GM12878 (cell line): ENCODE measurements at regions of chr16 and their contacts with region 1.

Region 1: GRCh38 chr16:14310519-14310991 is 239.4 kb downstream of the MRTFB start:
- DNase-seq: peak; percentile 86
- ATAC-seq: peak; percentile 76
- H3K4me3 ChIP-seq: peak overlapping the region; percentile 91; the same call in 1 of the 2 replicates
- H3K27ac ChIP-seq: peak overlapping the region; percentile 92
- H3K4me1 ChIP-seq: peaks cover 54% of the 10 kb centered on the region
- H3K27me3 ChIP-seq: no peaks in the 10 kb centered on the region
- CTCF ChIP-seq: peak; percentile 35 to 60 (median 43); a peak in 5 of 6 replicates
- EP300 ChIP-seq: peak; percentile 82 to 97
- POLR2A ChIP-seq: 0 out of 2 replicates have a peak, but pooled peaks have one; percentile 27
- RAD21 ChIP-seq: peak; percentile 13; the same call in 1 of the 2 replicates

Region 2: GRCh38 chr16:13742928-13743327 is 567.6 kb before region 1 on chr16:
- CTCF ChIA-PET with region 1: no interaction called
- POLR2A ChIA-PET with region 1: no interaction called
- RAD21 ChIA-PET with region 1: no interaction called
- SMC1A ChIA-PET with region 1: no interaction called
- in situ Hi-C with region 1: no loop called
- intact Hi-C with region 1: no loop called
- DNase-seq: no peak
- ATAC-seq: no peak
- H3K4me3 ChIP-seq: no peak overlapping the region
- H3K27ac ChIP-seq: no peak overlapping the region
- H3K4me1 ChIP-seq: no peaks in the 10 kb centered on the region
- H3K27me3 ChIP-seq: no peaks in the 10 kb centered on the region
- CTCF ChIP-seq: no peak
- EP300 ChIP-seq: no peak
- POLR2A ChIP-seq: no peak
- RAD21 ChIP-seq: no peak

Region 3: GRCh38 chr16:13945744-13946505 is 364.6 kb before region 1 on chr16:
- CTCF ChIA-PET with region 1: no interaction called
- POLR2A ChIA-PET with region 1: no interaction called
- RAD21 ChIA-PET with region 1: no interaction called
- SMC1A ChIA-PET with region 1: no interaction called
- in situ Hi-C with region 1: no loop called
- intact Hi-C with region 1: no loop called
- DNase-seq: no peak
- ATAC-seq: no peak
- H3K4me3 ChIP-seq: no peak overlapping the region
- H3K27ac ChIP-seq: no peak overlapping the region
- H3K4me1 ChIP-seq: no peaks in the 10 kb centered on the region
- H3K27me3 ChIP-seq: no peaks in the 10 kb centered on the region
- CTCF ChIP-seq: no peak
- EP300 ChIP-seq: no peak
- POLR2A ChIP-seq: no peak
- RAD21 ChIP-seq: no peak

Region 4: DNA sequence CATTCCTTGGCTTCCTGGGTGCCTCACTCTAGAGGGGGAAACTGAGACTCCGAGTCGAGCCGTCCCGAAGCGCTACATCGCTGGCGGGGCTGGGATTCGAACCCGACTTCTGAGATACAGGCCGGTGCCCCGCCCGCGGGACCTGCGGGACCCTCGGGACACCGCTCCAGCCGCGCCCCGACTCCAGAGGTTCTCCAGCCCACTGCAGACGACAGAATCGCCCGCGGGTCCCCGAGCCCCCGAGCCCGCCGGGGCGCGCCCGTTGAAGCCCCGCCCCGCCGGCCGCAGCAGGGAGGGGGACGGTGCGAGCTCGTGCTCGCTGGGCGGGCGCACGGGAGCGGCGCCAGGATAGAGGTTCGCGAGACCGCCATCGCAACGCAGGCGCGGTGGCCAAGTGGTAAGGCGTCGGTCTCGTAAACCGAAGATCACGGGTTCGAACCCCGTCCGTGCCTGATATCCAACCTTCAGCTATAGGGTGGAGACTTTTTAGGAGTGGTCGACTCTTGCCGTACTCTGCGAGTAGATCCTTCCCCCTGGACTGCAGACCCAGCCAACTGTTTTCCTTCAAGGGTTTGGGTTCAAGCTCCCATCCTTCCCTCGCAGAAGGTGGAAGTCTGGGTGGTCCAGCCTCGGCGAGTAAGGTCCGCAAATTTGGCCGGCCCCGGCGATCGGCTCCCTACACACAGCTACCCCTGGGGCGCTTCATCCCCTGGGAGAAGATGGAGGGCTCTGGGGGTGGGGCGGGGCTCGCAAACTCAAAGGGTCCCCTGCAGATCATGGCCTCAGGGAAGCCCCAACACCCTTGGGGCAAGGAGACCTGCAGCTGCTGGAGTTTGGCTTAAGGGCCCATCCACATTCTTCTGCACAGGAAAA is 24.8 kb before region 1 on chr16:
- CTCF ChIA-PET with region 1: interaction called, 15 read pairs
- POLR2A ChIA-PET with region 1: interaction called, 9 read pairs
- RAD21 ChIA-PET with region 1: interaction called, 17 read pairs
- SMC1A ChIA-PET with region 1: interaction called, 6 read pairs
- in situ Hi-C with region 1: no loop called
- intact Hi-C with region 1: no loop called
- DNase-seq: peak; percentile 87
- ATAC-seq: peak; percentile 89
- H3K4me3 ChIP-seq: peak overlapping the region; percentile 89
- H3K27ac ChIP-seq: peak overlapping the region; percentile 76
- H3K4me1 ChIP-seq: peaks cover 8% of the 10 kb centered on the region
- H3K27me3 ChIP-seq: no peaks in the 10 kb centered on the region
- CTCF ChIP-seq: no peak
- EP300 ChIP-seq: peak; percentile 10 to 49; a peak in 1 of 4 replicates
- POLR2A ChIP-seq: no peak
- RAD21 ChIP-seq: no peak

Region 5: GRCh38 chr16:14321542-14321941 is 11.0 kb after region 1 on chr16:
- CTCF ChIA-PET with region 1: interaction called, 6 read pairs
- POLR2A ChIA-PET with region 1: interaction called, 12 read pairs
- RAD21 ChIA-PET with region 1: interaction called, 3 read pairs
- SMC1A ChIA-PET with region 1: interaction called, 4 read pairs
- in situ Hi-C with region 1: no loop called
- intact Hi-C with region 1: no loop called
- DNase-seq: no peak
- ATAC-seq: peak; percentile 13
- H3K4me3 ChIP-seq: no peak overlapping the region
- H3K27ac ChIP-seq: no peak overlapping the region
- H3K4me1 ChIP-seq: no peaks in the 10 kb centered on the region
- H3K27me3 ChIP-seq: no peaks in the 10 kb centered on the region
- CTCF ChIP-seq: no peak
- EP300 ChIP-seq: no peak
- POLR2A ChIP-seq: no peak
- RAD21 ChIP-seq: no peak

Region 6: GRCh38 chr16:14354551-14355351 is 44.2 kb after region 1 on chr16:
- CTCF ChIA-PET with region 1: interaction called, 25 read pairs
- POLR2A ChIA-PET with region 1: interaction called, 14 read pairs
- RAD21 ChIA-PET with region 1: interaction called, 36 read pairs
- SMC1A ChIA-PET with region 1: interaction called, 41 read pairs
- in situ Hi-C with region 1: no loop called
- intact Hi-C with region 1: loop called (anchors 1 kb)
- DNase-seq: peak; percentile 100
- ATAC-seq: peak; percentile 92
- H3K4me3 ChIP-seq: no peak overlapping the region
- H3K27ac ChIP-seq: peak overlapping the region; percentile 98
- H3K4me1 ChIP-seq: peaks cover 39% of the 10 kb centered on the region
- H3K27me3 ChIP-seq: no peaks in the 10 kb centered on the region
- CTCF ChIP-seq: no peak
- EP300 ChIP-seq: peak; percentile 98 to 99
- POLR2A ChIP-seq: no peak
- RAD21 ChIP-seq: no peak

Region 7: DNA sequence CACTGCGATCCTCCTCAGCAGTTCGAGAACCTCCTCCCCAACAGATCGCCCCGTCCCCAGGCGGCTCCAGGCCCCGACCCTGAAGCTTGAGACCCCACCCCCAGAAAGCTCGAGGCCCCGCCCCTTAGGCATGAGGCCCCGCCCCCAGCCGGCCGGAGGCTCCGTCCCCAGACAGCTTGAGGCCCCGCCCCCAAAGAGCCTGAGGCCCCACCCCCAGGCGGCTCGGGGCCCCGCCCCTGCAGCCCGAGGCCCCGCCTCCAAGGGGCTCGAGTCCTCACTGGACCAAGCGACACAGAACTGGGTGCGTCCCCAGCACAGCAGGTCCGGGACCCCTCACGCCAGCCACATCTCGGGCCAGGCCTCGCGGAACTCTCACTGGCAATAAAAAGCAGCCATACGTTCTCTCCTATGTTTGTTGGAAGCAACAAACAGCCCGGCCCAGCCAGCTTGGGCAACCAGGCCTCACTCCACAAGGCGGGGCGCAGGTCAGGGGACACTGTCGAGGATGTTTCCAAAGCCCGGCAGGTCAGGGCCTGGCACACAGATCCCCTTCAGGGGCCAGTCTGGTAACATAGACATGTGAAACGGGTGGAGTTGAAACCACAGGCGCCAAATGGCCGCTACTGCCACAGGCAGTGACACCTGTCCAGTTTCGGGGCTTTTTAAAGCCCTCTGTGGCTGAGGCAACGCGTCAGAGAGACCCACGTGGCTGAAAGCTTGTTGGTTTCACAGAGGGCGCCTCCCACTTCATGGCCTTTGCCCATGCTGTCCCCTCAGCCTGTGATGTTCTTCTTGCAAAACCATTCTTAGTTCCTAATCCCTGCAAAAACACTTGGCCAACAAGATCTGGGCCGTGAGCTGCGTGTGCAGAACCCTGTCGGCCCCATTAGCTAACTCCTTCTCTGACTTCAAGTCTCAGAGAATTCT is 95.3 kb after region 1 on chr16:
- CTCF ChIA-PET with region 1: interaction called, 6 read pairs
- POLR2A ChIA-PET with region 1: interaction called, 3 read pairs
- RAD21 ChIA-PET with region 1: interaction called, 4 read pairs
- SMC1A ChIA-PET with region 1: interaction called, 4 read pairs
- in situ Hi-C with region 1: loop called (anchors 5 kb)
- intact Hi-C with region 1: loop called (anchors 2 kb)
- DNase-seq: peak; percentile 77
- ATAC-seq: peak; percentile 92
- H3K4me3 ChIP-seq: no peak overlapping the region
- H3K27ac ChIP-seq: peak overlapping the region; percentile 90
- H3K4me1 ChIP-seq: peaks cover 29% of the 10 kb centered on the region
- H3K27me3 ChIP-seq: no peaks in the 10 kb centered on the region
- CTCF ChIP-seq: no peak
- EP300 ChIP-seq: peak; percentile 77 to 78; a peak in 3 of 4 replicates
- POLR2A ChIP-seq: peak; percentile 53; the same call in 1 of the 2 replicates
- RAD21 ChIP-seq: no peak

Region 8: GRCh38 chr16:14501331-14502255 is 191.0 kb after region 1 on chr16:
- CTCF ChIA-PET with region 1: interaction called, 49 read pairs
- POLR2A ChIA-PET with region 1: interaction called, 10 read pairs
- RAD21 ChIA-PET with region 1: interaction called, 75 read pairs
- SMC1A ChIA-PET with region 1: interaction called, 95 read pairs
- in situ Hi-C with region 1: no loop called
- intact Hi-C with region 1: loop called (anchors 2 kb)
- DNase-seq: peak; percentile 50
- ATAC-seq: peak; percentile 35
- H3K4me3 ChIP-seq: no peak overlapping the region
- H3K27ac ChIP-seq: peak overlapping the region; percentile 75
- H3K4me1 ChIP-seq: peaks cover 61% of the 10 kb centered on the region
- H3K27me3 ChIP-seq: no peaks in the 10 kb centered on the region
- CTCF ChIP-seq: no peak
- EP300 ChIP-seq: no peak; a peak in 1 of 4 replicates
- POLR2A ChIP-seq: no peak
- RAD21 ChIP-seq: no peak